Mammary epithelial cell (primary cell): ENCODE measurements at regions of chr16 and their contacts with region 1.

Region 1: GRCh38 chr16:67198238-67198734 is 645 bp upstream of the ELMO3 start:
- DNase-seq: peak; percentile 70
- H3K4me3 ChIP-seq: peak overlapping the region in 1 of 3 experiments; percentile 3
- H3K27ac ChIP-seq: peak overlapping the region; percentile 24
- H3K4me1 ChIP-seq: peaks cover 28% of the 10 kb centered on the region
- H3K27me3 ChIP-seq: no peaks in the 10 kb centered on the region
- CTCF ChIP-seq: peak; percentile 98 to 99

Region 2: GRCh38 chr16:66968847-66969246 is 229.4 kb before region 1 on chr16:
- CTCF ChIA-PET with region 1: no interaction called
- dilution Hi-C with region 1: loop called (anchors 5 kb)
- in situ Hi-C with region 1: no loop called
- intact Hi-C with region 1: no loop called
- DNase-seq: no peak
- H3K4me3 ChIP-seq: no peak overlapping the region
- H3K27ac ChIP-seq: no peak overlapping the region
- H3K4me1 ChIP-seq: peaks cover 18% of the 10 kb centered on the region
- H3K27me3 ChIP-seq: no peaks in the 10 kb centered on the region
- CTCF ChIP-seq: no peak

Region 3: GRCh38 chr16:67017810-67018488 is 180.3 kb before region 1 on chr16:
- CTCF ChIA-PET with region 1: no interaction called
- dilution Hi-C with region 1: no loop called
- in situ Hi-C with region 1: no loop called
- intact Hi-C with region 1: loop called (anchors 1 kb)
- DNase-seq: peak; percentile 91
- H3K4me3 ChIP-seq: no peak overlapping the region
- H3K27ac ChIP-seq: no peak overlapping the region
- H3K4me1 ChIP-seq: peaks cover 22% of the 10 kb centered on the region
- H3K27me3 ChIP-seq: no peaks in the 10 kb centered on the region
- CTCF ChIP-seq: peak; percentile 85 to 98

Region 4: DNA sequence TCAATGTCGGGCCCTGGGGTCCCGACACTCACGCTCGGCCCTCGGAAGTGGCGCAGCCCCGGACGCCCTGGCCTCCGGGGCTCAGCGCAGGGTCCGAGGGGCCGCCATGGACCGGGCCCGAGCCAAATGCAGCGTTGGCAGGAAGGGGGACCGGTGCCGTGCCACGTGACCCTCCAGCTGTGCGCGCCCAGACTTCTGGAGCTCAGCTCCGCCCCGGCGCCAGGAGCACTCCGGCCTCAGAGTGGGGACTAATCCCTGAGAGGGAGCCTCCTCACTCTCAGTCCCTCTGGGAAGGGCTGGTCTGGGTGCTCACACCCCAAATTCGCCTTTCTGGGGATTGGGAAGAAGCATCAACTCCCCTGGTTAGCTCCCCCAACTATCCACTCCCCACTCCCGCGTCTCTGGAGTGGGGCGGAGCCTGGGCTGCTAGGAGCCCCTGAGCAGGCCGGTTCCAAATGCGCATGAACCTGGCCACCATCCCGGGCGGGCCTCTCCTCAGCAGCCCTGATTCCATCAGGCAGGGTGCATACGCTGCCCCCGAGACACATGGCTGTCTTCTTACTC is 47.4 kb before region 1 on chr16 and contains the start of gene B3GNT9:
- CTCF ChIA-PET with region 1: no interaction called
- dilution Hi-C with region 1: no loop called
- in situ Hi-C with region 1: no loop called
- intact Hi-C with region 1: no loop called
- DNase-seq: no peak
- H3K4me3 ChIP-seq: peak within 1 kb of the TSS; percentile 62 to 70 (median 62)
- H3K27ac ChIP-seq: no peak within 1 kb of the TSS
- H3K4me1 ChIP-seq: peaks cover 34% of the 10 kb centered on the region
- H3K27me3 ChIP-seq: no peaks in the 10 kb centered on the region
- CTCF ChIP-seq: no peak
- total RNA-seq, gene B3GNT9: 4.7 to 22.0 TPM

Region 5: DNA sequence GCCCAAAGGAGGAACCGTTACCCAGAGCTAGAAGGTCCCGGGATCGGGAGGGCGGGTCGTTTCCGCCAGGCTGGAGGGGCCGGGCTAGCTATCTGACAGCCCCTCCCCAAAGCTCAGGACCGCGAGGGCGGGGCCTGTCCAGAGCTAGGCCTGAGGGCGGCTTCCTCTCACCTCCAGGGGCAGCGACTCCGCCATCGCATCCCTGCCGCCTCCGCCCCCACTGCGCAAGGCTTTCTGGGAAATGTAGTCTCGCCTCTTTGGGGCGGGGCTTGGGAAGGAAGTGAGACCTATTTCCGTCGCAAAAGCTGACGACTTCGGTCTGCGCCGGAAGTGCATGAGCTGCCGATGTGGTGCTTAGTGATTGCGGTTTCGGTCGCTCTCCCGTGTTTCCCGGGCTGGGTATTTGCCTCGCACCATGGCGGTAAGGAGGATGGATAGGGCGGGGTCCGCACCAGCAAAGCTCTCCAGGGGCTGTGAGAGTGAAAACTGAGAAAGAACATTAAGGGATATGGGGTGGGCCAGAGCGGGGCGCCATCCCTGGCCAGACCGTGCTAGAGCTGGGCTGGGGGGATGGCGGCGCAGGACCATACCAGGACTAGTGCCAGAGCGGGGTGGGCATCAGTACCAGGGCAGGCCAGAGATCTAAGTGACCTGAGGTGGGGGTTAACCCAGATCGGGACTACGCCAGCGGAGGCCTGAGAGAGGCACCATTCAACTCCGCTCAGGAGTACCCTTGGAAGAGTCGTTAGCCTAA is 28.7 kb after region 1 on chr16 and contains the start of gene TMEM208:
- CTCF ChIA-PET with region 1: no interaction called
- dilution Hi-C with region 1: no loop called
- in situ Hi-C with region 1: no loop called
- intact Hi-C with region 1: loop called (anchors 1 kb)
- DNase-seq: peak; percentile 98
- H3K4me3 ChIP-seq: peak within 1 kb of the TSS; percentile 71 to 98 (median 86)
- H3K27ac ChIP-seq: peak within 1 kb of the TSS; percentile 73
- H3K4me1 ChIP-seq: peaks cover 11% of the 10 kb centered on the region
- H3K27me3 ChIP-seq: no peaks in the 10 kb centered on the region
- CTCF ChIP-seq: peak in 1 of 2 donors; percentile 22
- total RNA-seq, gene TMEM208: 24.5 to 43.1 TPM

Region 6: DNA sequence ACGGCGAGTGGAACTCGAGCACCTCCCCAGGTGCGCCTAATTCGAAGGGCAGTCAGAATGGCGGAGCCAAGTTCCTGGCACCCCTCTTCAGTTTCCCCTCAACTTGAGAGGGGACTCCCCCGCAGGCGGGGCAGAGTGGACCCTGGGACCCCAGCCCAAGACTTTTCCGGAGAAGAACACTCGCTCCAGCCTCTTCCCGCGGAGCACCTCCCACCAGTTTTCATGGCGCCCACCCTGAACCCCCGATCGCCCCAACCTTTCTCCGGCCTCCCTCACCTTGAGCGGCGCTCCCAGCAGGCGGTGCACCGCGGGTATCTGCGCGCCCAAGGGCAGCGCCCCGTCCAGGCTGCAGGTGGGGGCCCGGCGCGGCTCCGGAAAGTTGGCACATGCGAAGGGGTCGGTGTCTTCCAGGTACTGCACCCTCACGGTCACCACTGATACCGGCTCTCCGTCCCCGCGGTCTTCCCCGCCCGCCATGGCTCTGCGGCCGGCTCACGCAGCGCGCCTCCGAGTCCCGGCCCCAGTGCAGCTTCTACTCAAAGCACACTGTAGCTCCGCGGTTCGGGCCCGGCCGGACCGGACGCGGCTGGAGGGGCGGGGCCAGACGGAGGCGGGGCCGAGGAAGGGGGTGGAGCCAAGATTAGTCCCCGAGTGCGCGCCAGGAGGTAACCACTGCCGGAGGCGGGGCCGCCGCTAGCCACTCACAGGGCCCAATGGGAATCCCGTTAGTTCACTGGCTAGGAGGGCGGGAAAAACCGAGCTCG is 48.8 kb after region 1 on chr16 and contains the start of gene FHOD1:
- CTCF ChIA-PET with region 1: interaction called, 5 read pairs
- dilution Hi-C with region 1: no loop called
- in situ Hi-C with region 1: no loop called
- intact Hi-C with region 1: loop called (anchors 1 kb)
- DNase-seq: peak; percentile 94
- H3K4me3 ChIP-seq: peak within 1 kb of the TSS; percentile 72 to 76 (median 72)
- H3K27ac ChIP-seq: peak within 1 kb of the TSS; percentile 63
- H3K4me1 ChIP-seq: peaks cover 57% of the 10 kb centered on the region
- H3K27me3 ChIP-seq: peaks cover 4% of the 10 kb centered on the region
- CTCF ChIP-seq: no peak
- total RNA-seq, gene FHOD1: 6.7 to 38.7 TPM

Region 7: GRCh38 chr16:67284699-67285646 is 86.7 kb after region 1 on chr16:
- CTCF ChIA-PET with region 1: no interaction called
- dilution Hi-C with region 1: no loop called
- in situ Hi-C with region 1: no loop called
- intact Hi-C with region 1: loop called (anchors 1 kb)
- DNase-seq: peak; percentile 59
- H3K4me3 ChIP-seq: no peak overlapping the region
- H3K27ac ChIP-seq: no peak overlapping the region
- H3K4me1 ChIP-seq: peaks cover 5% of the 10 kb centered on the region
- H3K27me3 ChIP-seq: no peaks in the 10 kb centered on the region
- CTCF ChIP-seq: peak; percentile 58 to 89

Region 8: GRCh38 chr16:68553186-68553585 is 1354.9 kb after region 1 on chr16:
- CTCF ChIA-PET with region 1: no interaction called
- dilution Hi-C with region 1: no loop called
- in situ Hi-C with region 1: no loop called
- intact Hi-C with region 1: no loop called
- DNase-seq: no peak
- H3K4me3 ChIP-seq: no peak overlapping the region
- H3K27ac ChIP-seq: no peak overlapping the region
- H3K4me1 ChIP-seq: no peaks in the 10 kb centered on the region
- H3K27me3 ChIP-seq: no peaks in the 10 kb centered on the region
- CTCF ChIP-seq: no peak